ENCODE measurements at regions of chr18 and their contacts with region 1.

Region 1: GRCh38 chr18:7133181-7133580 is 15.6 kb upstream of the LAMA1 start:
- DNase-seq: peak in 1 of 2 experiments; percentile 68
- H3K4me3 ChIP-seq: no peak overlapping the region
- H3K4me3 Mint-ChIP-seq: peak overlapping the region; percentile 67
- H3K27ac Mint-ChIP-seq: peak overlapping the region; percentile 72
- H3K4me1 ChIP-seq: peaks cover 50% of the 10 kb centered on the region
- H3K4me1 Mint-ChIP-seq: peaks cover 44% of the 10 kb centered on the region
- H3K27me3 ChIP-seq: no peaks in the 10 kb centered on the region
- H3K27me3 Mint-ChIP-seq: no peaks in the 10 kb centered on the region
- CTCF ChIP-seq: no peak

Region 2: GRCh38 chr18:7059276-7059675 is 73.9 kb before region 1 on chr18:
- CTCF ChIA-PET with region 1: interaction called, 4 read pairs
- POLR2A ChIA-PET with region 1: interaction called, 16 read pairs
- intact Hi-C with region 1: loop called (anchors 1 kb)
- DNase-seq: peak in 1 of 2 experiments; percentile 56
- H3K4me3 ChIP-seq: no peak overlapping the region
- H3K4me3 Mint-ChIP-seq: peak overlapping the region; percentile 38
- H3K27ac Mint-ChIP-seq: peak overlapping the region; percentile 73
- H3K4me1 ChIP-seq: peaks cover 63% of the 10 kb centered on the region
- H3K4me1 Mint-ChIP-seq: peaks cover 44% of the 10 kb centered on the region
- H3K27me3 ChIP-seq: no peaks in the 10 kb centered on the region
- H3K27me3 Mint-ChIP-seq: no peaks in the 10 kb centered on the region
- CTCF ChIP-seq: no peak

Measured in Caco-2 (cell line).